Gastrocnemius medialis (tissue), 4 donors: ENCODE measurements at regions of chr10 and their contacts with region 1.

Region 1: DNA sequence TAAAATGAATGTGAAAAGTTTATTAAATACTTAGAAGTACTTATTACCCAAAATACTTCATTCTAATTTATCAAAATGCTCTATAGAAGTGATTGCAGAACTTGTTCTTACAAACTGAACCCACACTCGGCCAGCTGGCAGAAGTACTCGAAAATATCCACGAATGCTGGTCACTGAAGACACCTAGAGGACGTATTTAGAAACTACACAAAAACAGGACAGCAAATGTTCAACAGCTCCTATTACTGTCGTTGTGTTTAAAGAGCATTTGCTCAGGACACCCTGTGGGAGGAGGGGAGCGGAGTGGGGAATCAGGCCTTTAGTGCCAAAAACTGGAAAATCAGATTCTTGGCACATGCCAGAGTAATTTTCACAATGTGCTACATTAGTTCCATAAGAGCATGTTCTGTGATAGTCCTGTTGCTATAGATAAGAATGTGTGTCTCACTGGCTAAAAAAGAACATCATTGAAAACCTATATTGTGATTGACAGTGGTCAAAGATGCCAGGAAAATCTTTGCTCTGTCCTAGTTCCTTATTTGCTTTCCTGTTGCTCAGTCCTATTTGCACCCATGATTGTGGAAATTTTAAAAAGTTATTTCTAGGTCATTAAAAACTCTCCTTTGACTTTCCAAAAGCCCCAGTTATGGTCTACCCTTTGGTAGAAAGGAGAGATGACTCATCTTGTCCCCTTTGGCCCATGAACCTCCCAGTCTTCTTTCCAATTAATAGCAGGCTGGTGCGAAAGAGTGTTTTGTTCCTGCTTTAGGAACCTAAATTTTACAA is 49.0 kb upstream of the NRBF2 start:
- DNase-seq: peak; percentile 52 to 64
- ATAC-seq: peak; percentile 98 to 99
- H3K4me3 ChIP-seq: no peak overlapping the region
- H3K27ac ChIP-seq: no peak overlapping the region
- H3K4me1 ChIP-seq: no peaks in the 10 kb centered on the region
- H3K27me3 ChIP-seq: no peaks in the 10 kb centered on the region
- CTCF ChIP-seq: peak; percentile 56 to 72 (median 62)
- POLR2A ChIP-seq: no peak

Region 2: DNA sequence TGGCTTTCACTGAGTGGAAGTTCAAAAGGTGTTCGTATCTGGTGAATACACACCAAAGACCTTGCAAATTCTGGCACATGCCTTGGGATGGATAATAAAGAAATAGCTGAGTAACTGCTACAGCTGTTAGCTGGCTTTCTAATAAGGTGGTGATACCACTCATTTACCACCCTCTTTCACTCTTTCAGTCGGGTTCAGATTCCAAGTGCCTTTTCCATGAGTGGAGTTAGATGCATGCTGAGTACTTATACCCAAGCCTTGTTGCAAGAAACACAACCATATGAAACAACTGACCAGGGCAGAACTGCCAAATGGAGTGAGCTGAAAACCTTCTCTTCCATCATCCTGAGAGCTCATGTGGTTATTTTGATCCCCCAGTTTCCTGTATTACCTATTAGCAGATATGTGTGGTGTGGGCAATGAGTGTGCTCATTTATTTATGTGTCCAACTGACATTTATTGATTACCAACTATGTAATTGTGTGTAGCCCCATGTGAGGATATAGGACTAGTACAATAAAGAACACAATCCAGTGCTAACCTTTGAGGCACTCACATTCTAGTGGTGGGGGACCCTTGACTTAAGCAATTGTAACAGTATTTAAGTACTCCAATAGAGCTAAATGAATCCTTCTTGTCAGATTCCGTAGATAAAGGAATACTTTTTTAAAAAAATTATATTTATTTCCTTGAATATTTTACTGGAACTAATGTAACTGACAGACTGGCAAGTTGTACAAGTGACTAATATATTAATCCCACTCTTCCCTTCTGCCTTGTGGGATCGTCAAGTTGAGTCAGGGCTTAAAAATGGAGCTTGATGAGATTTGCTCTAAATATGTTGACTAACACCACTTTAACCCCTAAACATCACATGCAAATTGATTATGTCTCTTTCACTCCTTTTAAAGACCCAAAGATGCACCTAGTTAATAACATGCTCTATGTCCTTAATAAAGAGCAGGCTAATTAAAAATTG is 1057.9 kb before region 1 on chr10:
- in situ Hi-C with region 1: no loop called
- intact Hi-C with region 1: no loop called
- DNase-seq: no peak
- ATAC-seq: no peak
- H3K4me3 ChIP-seq: no peak overlapping the region
- H3K27ac ChIP-seq: no peak overlapping the region
- H3K4me1 ChIP-seq: peaks cover 0 to 3% of the 10 kb centered on the region in 2 donors
- H3K27me3 ChIP-seq: no peaks in the 10 kb centered on the region
- CTCF ChIP-seq: no peak
- POLR2A ChIP-seq: no peak

Region 3: GRCh38 chr10:62437696-62438095 is 646.4 kb before region 1 on chr10:
- in situ Hi-C with region 1: loop called in 1 of 4 experiments (anchors 25 kb)
- intact Hi-C with region 1: no loop called
- DNase-seq: no peak
- ATAC-seq: peak in 1 of 2 donors; percentile 60
- H3K4me3 ChIP-seq: no peak overlapping the region
- H3K27ac ChIP-seq: no peak overlapping the region
- H3K4me1 ChIP-seq: peaks cover 0 to 3% of the 10 kb centered on the region in 2 donors
- H3K27me3 ChIP-seq: no peaks in the 10 kb centered on the region
- CTCF ChIP-seq: peak; percentile 57 to 77 (median 64)
- POLR2A ChIP-seq: no peak

Region 4: DNA sequence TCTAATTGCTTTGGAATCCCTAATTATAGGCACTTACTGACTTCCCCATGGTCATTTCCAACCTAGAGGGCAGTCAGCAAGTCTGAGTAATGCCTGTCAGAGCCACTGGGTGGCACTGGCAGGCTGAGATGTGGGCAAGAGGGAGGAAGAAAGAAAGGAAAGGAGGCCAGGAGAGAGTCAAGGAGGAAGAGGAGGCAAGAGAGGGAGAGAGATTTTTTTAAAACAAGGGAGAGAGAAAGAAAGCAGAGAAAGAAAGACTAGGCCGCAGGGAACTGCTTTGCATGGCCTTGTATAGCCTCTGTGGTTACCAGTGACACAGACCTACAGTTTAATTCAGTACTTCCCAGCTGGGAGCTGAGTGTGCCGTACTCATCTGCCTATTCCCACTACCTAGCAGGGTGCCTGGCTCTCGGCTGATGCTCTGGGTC is 490.0 kb before region 1 on chr10:
- in situ Hi-C with region 1: loop called in 2 of 4 experiments (anchors 5 to 10 kb)
- intact Hi-C with region 1: loop called (anchors 1 kb)
- DNase-seq: peak; percentile 12 to 27
- ATAC-seq: peak; percentile 74 to 88
- H3K4me3 ChIP-seq: no peak overlapping the region
- H3K27ac ChIP-seq: no peak overlapping the region
- H3K4me1 ChIP-seq: no peaks in the 10 kb centered on the region
- H3K27me3 ChIP-seq: no peaks in the 10 kb centered on the region
- CTCF ChIP-seq: peak; percentile 61 to 76 (median 73)
- POLR2A ChIP-seq: no peak

Region 5: GRCh38 chr10:62610649-62611229 is 473.4 kb before region 1 on chr10:
- in situ Hi-C with region 1: loop called in 1 of 4 experiments (anchors 25 kb)
- intact Hi-C with region 1: loop called (anchors 1 kb)
- DNase-seq: peak in 1 of 2 donors; percentile 23
- ATAC-seq: no peak
- H3K4me3 ChIP-seq: no peak overlapping the region
- H3K27ac ChIP-seq: no peak overlapping the region
- H3K4me1 ChIP-seq: no peaks in the 10 kb centered on the region
- H3K27me3 ChIP-seq: no peaks in the 10 kb centered on the region
- CTCF ChIP-seq: peak in 4 of 5 experiments; percentile 49 to 61 (median 54)
- POLR2A ChIP-seq: no peak

Region 6: DNA sequence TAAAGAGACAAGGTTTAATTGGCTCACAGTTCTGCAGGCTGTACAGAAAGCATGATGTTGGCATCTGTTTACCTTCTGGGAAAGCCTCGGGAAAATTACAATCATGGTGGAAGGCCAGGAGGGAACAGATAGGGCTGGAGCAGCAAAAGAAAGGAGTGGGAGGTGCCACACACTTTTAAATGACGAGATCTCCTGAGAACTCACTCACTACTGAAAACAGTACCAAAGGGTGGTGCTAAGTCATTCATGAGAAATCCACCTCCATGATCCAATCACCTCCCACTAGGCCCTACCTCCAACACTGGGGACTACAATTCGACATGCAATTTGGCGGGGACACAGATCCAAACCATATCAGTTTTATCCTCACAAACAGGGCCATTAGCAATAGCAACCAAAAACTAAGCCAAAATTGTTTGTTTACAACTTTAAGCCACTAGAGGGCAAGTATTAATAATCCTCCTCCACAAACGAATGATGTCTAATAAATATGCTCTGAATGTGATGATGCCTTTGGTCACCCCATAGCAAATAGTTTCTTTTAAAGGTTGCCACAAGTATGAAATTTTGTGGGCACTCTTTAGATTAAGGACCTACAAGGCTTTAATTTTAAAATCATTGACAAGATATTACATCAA is 80.2 kb before region 1 on chr10:
- in situ Hi-C with region 1: no loop called
- intact Hi-C with region 1: loop called (anchors 5 kb)
- DNase-seq: no peak
- ATAC-seq: no peak
- H3K4me3 ChIP-seq: no peak overlapping the region
- H3K27ac ChIP-seq: no peak overlapping the region
- H3K4me1 ChIP-seq: no peaks in the 10 kb centered on the region
- H3K27me3 ChIP-seq: no peaks in the 10 kb centered on the region
- CTCF ChIP-seq: peak in 2 of 5 experiments; percentile 16 to 36
- POLR2A ChIP-seq: no peak

Region 7: GRCh38 chr10:63157845-63158624 is 73.9 kb after region 1 on chr10:
- in situ Hi-C with region 1: loop called in 1 of 4 experiments (anchors 10 kb)
- intact Hi-C with region 1: loop called (anchors 5 kb)
- DNase-seq: no peak
- ATAC-seq: peak; percentile 76 to 88
- H3K4me3 ChIP-seq: no peak overlapping the region
- H3K27ac ChIP-seq: no peak overlapping the region
- H3K4me1 ChIP-seq: peaks cover 7 to 13% of the 10 kb centered on the region in 2 donors
- H3K27me3 ChIP-seq: no peaks in the 10 kb centered on the region
- CTCF ChIP-seq: peak; percentile 80 to 84 (median 83)
- POLR2A ChIP-seq: no peak